H1 (cell line): ENCODE measurements at regions of chr5 and their contacts with region 1.

Region 1: DNA sequence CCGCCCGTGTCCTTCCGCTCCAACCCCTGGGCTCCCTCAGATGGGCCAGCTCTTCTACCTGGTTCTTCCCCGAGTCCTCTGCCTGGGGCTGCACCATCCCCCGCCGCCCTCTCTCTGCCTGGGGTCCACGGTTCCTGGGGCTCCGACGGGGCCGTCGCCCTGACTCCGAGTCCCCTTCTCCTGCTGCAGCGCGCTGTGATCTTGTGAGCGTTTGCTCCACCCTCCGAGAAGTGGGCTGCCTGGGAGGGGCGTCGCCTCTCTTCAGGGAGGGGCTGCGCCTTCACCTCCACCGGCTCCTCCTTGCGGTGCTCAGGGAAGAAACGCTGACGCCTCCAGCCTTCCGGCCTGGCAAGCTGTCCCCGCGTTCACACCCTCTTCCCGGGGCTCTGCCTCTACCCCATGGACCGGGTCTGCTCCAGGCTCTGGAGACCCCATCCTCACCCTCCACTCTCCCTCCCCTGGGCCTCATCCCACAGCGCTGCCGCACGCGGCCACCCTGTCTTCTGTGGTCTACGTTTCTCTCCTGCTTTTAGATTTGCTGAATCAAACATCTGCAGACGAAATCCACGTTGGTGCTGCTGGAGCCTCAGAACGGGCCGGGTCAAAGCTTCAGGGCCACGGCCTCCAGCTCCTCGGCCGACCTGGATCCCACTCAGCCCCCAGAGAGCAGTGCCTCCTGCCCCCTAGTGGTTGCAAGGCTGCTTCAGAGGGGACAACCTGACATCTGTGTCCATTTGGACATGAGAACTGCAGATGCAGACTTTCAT is 22.7 kb upstream of the SLC6A3 start:
- DNase-seq: peak in 1 of 2 experiments; percentile 78
- H3K4me3 ChIP-seq: no peak overlapping the region
- H3K27ac ChIP-seq: no peak overlapping the region
- H3K4me1 ChIP-seq: no peaks in the 10 kb centered on the region
- H3K27me3 ChIP-seq: no peaks in the 10 kb centered on the region; a peak in 1 of 7 replicates
- CTCF ChIP-seq: peak in 2 of 3 experiments; percentile 85 to 91; a peak in 3 of 4 replicates
- EP300 ChIP-seq: no peak
- POLR2A ChIP-seq: no peak
- RAD21 ChIP-seq: peak; percentile 80 to 85

Region 2: GRCh38 chr5:1420211-1421195 is 47.4 kb before region 1 on chr5:
- CTCF ChIA-PET with region 1: no interaction called
- POLR2A ChIA-PET with region 1: no interaction called
- DNase-seq: no peak
- H3K4me3 ChIP-seq: no peak overlapping the region
- H3K27ac ChIP-seq: no peak overlapping the region
- H3K4me1 ChIP-seq: no peaks in the 10 kb centered on the region
- H3K27me3 ChIP-seq: no peaks in the 10 kb centered on the region
- CTCF ChIP-seq: no peak
- EP300 ChIP-seq: no peak
- POLR2A ChIP-seq: no peak
- RAD21 ChIP-seq: no peak

Region 3: DNA sequence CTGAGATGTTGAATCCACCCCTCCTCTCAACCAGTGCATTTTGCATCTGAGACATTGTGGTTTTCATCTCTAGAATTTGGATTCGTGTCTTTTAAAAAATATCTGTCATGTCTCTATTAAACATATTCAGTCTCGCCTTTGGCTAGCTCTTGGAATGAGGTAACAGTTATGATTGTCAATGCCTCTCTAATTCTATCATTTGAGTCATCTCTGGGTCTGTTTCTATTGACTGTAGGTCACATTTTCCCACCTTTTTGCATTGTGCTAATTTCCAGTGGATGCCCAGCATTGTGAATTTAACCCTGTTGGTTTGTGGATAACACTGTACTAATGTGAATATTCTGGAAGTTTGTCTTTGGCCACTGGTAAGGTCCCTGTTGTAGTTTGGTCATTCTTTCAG is 14.3 kb before region 1 on chr5:
- CTCF ChIA-PET with region 1: interaction called, 19 read pairs
- POLR2A ChIA-PET with region 1: interaction called, 3 read pairs
- DNase-seq: no peak
- H3K4me3 ChIP-seq: no peak overlapping the region
- H3K27ac ChIP-seq: no peak overlapping the region
- H3K4me1 ChIP-seq: no peaks in the 10 kb centered on the region
- H3K27me3 ChIP-seq: peaks cover 0 to 7% (median 4%) of the 10 kb centered on the region in 4 experiments; a peak in 3 of 7 replicates
- CTCF ChIP-seq: no peak
- EP300 ChIP-seq: no peak
- POLR2A ChIP-seq: no peak
- RAD21 ChIP-seq: no peak